PC-3 (cell line): ENCODE measurements at regions of chr9 and their contacts with region 1.

Region 1: GRCh38 chr9:12719431-12719830 is 26.2 kb downstream of the TYRP1 start:
- DNase-seq: peak; percentile 45
- ATAC-seq: no peak
- H3K4me3 ChIP-seq: no peak overlapping the region
- H3K27ac ChIP-seq: no peak overlapping the region
- H3K4me1 ChIP-seq: peaks cover 17% of the 10 kb centered on the region
- H3K27me3 ChIP-seq: no peaks in the 10 kb centered on the region
- CTCF ChIP-seq: peak; percentile 66

Region 2: GRCh38 chr9:12554636-12555035 is 164.8 kb before region 1 on chr9:
- CTCF ChIA-PET with region 1: no interaction called
- POLR2A ChIA-PET with region 1: no interaction called
- intact Hi-C with region 1: no loop called
- DNase-seq: peak; percentile 25
- ATAC-seq: peak; percentile 35; the same call in 1 of the 2 replicates
- H3K4me3 ChIP-seq: no peak overlapping the region
- H3K27ac ChIP-seq: no peak overlapping the region
- H3K4me1 ChIP-seq: no peaks in the 10 kb centered on the region
- H3K27me3 ChIP-seq: no peaks in the 10 kb centered on the region
- CTCF ChIP-seq: peak; percentile 49; the same call in 1 of the 2 replicates

Region 3: DNA sequence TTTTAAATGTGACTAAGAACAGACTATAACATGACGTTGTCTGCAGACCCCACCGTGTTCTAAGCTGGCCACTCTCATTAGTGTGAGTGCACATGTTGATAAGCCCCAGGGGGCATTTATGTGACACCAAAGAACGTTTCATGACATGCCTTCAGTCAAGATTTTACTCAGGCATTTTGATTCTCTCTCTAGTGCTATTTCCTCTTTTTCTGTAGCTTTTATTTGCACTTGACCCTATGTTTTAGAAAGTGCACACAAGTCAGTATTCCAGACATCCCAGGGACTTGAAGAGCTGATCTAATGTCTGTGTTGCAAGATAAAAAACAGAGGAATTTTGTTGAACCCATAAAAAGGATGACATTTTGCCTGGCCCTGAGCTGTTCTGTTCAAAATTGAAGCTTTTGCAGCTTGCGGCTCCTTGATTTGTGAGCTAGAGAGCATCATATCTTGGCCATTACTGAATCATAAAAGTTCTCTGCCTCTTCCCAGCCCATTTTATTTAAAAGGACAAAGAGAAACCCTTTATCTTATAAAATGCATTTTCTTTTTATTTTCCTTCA is 107.1 kb before region 1 on chr9:
- CTCF ChIA-PET with region 1: no interaction called
- POLR2A ChIA-PET with region 1: no interaction called
- intact Hi-C with region 1: no loop called
- DNase-seq: no peak
- ATAC-seq: no peak
- H3K4me3 ChIP-seq: no peak overlapping the region
- H3K27ac ChIP-seq: no peak overlapping the region
- H3K4me1 ChIP-seq: no peaks in the 10 kb centered on the region
- H3K27me3 ChIP-seq: 0 out of 2 replicates have a peak, but pooled peaks cover 4% of the 10 kb centered on the region
- CTCF ChIP-seq: no peak

Region 4: GRCh38 chr9:12702160-12702758 is 17.2 kb before region 1 on chr9:
- CTCF ChIA-PET with region 1: interaction called, 3 read pairs
- POLR2A ChIA-PET with region 1: no interaction called
- intact Hi-C with region 1: loop called (anchors 1 kb)
- DNase-seq: peak; percentile 70
- ATAC-seq: peak; percentile 54
- H3K4me3 ChIP-seq: peak overlapping the region; percentile 52; the same call in 1 of the 2 replicates
- H3K27ac ChIP-seq: no peak overlapping the region
- H3K4me1 ChIP-seq: peaks cover 17% of the 10 kb centered on the region
- H3K27me3 ChIP-seq: no peaks in the 10 kb centered on the region
- CTCF ChIP-seq: peak; percentile 81

Region 5: GRCh38 chr9:12775679-12776512 is 56.5 kb after region 1 on chr9:
- CTCF ChIA-PET with region 1: interaction called, 4 read pairs
- POLR2A ChIA-PET with region 1: no interaction called
- intact Hi-C with region 1: loop called (anchors 1 kb)
- DNase-seq: peak; percentile 74
- ATAC-seq: peak; percentile 76
- H3K4me3 ChIP-seq: peak overlapping the region; percentile 86
- H3K27ac ChIP-seq: peak overlapping the region; percentile 92
- H3K4me1 ChIP-seq: peaks cover 25% of the 10 kb centered on the region
- H3K27me3 ChIP-seq: no peaks in the 10 kb centered on the region
- CTCF ChIP-seq: peak; percentile 59

Region 6: DNA sequence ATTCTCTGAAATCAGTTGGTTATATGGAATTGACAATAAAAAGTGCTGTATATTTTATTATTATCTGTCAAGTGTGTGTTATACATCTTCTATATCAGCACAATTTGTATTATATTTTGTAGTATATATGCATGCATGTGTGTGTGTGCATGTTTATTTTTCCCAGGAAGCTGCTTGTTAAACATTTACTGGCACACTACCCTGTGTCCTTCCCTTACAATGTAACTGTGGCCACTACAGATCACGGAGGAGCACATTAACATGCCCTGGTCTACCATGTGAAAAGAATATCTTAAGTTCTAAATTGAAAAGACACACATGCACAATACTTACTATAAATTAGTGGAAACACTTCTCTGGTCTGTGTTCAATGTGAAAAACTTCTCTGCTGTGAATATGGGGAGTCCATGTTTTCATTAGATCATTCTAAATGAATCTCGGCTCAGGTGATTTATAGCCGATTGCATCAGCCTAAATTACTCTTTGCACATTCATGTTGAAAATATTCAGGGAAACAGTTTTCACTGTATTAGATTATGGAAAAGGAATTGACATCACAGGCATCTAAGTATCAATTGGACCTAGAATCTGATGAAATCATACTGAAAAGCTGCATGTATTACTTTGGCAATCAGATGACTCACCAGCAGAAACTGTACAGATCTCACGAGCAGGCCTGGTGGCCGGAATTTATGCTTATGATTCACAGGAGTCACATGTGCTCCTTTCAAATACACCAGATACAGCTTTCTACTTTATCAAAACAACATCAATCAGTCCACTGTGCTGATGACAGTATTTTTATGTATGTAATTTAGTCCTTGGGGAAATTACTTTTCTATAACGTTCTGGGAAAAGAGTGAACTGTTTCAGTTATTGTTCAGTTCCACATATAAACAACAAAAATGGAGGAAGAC is 94.8 kb after region 1 on chr9:
- CTCF ChIA-PET with region 1: no interaction called
- POLR2A ChIA-PET with region 1: no interaction called
- intact Hi-C with region 1: loop called (anchors 2 kb)
- DNase-seq: peak; percentile 93
- ATAC-seq: peak; percentile 62
- H3K4me3 ChIP-seq: peak overlapping the region; percentile 35
- H3K27ac ChIP-seq: peak overlapping the region; percentile 100
- H3K4me1 ChIP-seq: peaks cover 65% of the 10 kb centered on the region
- H3K27me3 ChIP-seq: no peaks in the 10 kb centered on the region
- CTCF ChIP-seq: no peak

Region 7: DNA sequence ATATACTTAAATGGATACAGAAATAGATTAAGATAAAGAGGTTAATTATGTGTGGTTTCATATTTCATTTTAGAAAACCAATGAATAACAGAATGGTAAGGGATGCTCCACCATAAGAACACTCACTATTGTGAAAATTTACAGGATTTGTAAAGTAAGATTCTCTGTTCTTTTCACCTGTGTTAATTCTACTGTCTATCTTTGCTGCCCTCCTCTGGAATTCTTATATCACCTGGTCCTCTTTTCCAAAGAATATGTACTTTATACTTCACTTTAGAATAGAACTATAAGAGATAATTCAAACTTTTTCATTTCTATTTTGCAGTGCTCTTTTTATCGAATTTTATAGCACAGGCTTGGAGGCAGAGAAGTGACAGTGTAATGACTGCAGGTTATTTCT is 268.8 kb after region 1 on chr9:
- CTCF ChIA-PET with region 1: interaction called, 3 read pairs
- POLR2A ChIA-PET with region 1: no interaction called
- intact Hi-C with region 1: loop called (anchors 1 kb)
- DNase-seq: no peak
- ATAC-seq: no peak
- H3K4me3 ChIP-seq: no peak overlapping the region
- H3K27ac ChIP-seq: no peak overlapping the region
- H3K4me1 ChIP-seq: no peaks in the 10 kb centered on the region
- H3K27me3 ChIP-seq: no peaks in the 10 kb centered on the region
- CTCF ChIP-seq: peak; percentile 33; the same call in 1 of the 2 replicates

Region 8: DNA sequence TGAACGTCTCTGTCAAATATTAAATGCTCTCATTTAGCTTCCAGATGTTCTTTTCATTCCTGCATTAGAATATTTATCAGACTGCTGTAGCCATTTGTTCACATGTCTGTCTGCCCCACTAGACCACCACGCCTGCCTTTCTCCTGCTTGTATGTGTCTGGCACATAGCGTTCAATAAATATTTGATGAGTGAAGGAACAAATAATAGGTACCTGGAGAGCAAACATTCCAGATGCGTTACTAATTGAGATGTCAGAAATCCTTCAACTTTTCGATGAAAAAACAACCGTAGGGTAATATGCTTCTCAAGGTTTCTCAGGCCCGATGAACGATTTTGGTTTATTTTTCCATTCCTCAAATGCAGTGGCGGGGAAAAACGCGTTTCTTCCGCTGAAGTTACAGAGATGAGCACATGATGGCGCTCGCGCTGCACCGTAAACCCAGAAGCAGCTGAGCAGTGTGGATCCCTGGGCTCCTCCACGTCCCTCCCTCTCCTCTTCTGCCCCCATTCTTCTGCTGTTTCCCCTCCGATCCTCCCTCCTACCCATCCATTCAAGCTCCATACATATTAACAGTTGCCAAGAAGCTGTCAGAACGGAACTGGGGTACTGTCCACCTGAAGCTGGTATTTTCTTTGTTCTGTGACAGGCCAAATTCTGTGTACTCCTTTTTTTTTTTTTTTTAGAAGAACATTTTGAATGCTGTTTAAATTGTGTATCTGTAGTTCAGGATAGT is 314.7 kb after region 1 on chr9:
- CTCF ChIA-PET with region 1: no interaction called
- POLR2A ChIA-PET with region 1: no interaction called
- intact Hi-C with region 1: loop called (anchors 2 kb)
- DNase-seq: peak; percentile 84
- ATAC-seq: peak; percentile 81
- H3K4me3 ChIP-seq: peak overlapping the region; percentile 65
- H3K27ac ChIP-seq: peak overlapping the region; percentile 31; the same call in 1 of the 2 replicates
- H3K4me1 ChIP-seq: peaks cover 26% of the 10 kb centered on the region
- H3K27me3 ChIP-seq: no peaks in the 10 kb centered on the region
- CTCF ChIP-seq: peak; percentile 79

Region 9: DNA sequence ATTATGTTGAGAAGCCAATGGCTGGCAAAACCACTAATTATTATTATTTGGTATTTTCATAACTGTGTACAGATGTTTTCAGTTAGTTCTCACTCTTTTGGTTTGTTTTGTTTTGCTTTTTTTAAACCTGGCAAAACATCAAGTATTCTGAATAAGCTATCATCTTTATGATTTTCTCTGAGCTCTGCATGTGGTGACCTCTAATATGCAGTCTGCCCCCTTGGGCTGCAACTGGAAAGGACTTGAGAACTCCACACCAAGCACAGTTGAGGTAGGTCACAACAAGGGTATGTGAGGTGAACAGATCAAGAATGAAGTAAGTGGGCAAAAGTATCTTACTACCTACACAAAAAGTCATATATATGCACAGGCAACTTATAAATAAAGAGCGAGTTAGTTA is 1392.3 kb after region 1 on chr9:
- CTCF ChIA-PET with region 1: no interaction called
- POLR2A ChIA-PET with region 1: interaction called, 13 read pairs
- intact Hi-C with region 1: no loop called
- DNase-seq: no peak
- ATAC-seq: no peak
- H3K4me3 ChIP-seq: no peak overlapping the region
- H3K27ac ChIP-seq: no peak overlapping the region
- H3K4me1 ChIP-seq: no peaks in the 10 kb centered on the region
- H3K27me3 ChIP-seq: no peaks in the 10 kb centered on the region
- CTCF ChIP-seq: no peak